Esophagus muscularis mucosa (tissue), 4 donors: ENCODE measurements at regions of chr12 and their contacts with region 1.

Region 1: DNA sequence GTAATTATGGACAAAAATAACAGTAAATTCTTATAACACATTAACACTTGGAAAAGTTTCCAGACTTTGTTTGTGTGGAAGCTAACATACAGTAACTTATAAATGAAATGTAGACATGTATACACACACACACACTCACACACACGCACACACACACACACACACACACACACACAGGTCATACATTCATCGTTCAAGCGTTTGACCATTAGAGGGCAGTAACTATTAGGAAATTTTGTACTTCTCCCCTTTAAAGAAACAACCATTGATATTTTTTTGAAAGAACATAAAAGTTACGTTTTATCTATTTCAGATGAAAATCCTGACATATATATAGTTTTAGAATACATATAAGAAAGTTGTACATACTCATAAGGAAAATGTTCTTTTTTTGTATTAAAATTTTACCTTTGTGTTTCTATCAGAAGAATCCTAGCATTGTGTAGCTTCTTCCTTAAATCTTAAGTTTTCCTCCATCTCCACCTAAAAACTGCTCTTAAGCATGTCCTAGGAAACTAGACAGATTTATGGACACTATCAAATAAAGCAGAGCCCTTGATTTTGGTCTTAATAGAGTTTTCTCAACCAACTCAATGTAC is 29.0 kb downstream of the PTPRQ start:
- DNase-seq: no peak
- H3K4me3 ChIP-seq: no peak overlapping the region
- H3K27ac ChIP-seq: no peak overlapping the region
- H3K4me1 ChIP-seq: no peaks in the 10 kb centered on the region
- H3K27me3 ChIP-seq: no peaks in the 10 kb centered on the region
- CTCF ChIP-seq: peak; percentile 29 to 62 (median 49)
- EP300 ChIP-seq: no peak
- POLR2A ChIP-seq: no peak

Region 2: GRCh38 chr12:80553316-80553715 is 80.3 kb after region 1 on chr12:
- intact Hi-C with region 1: no loop called
- DNase-seq: no peak
- H3K4me3 ChIP-seq: no peak overlapping the region
- H3K27ac ChIP-seq: peak overlapping the region; percentile 14 to 53 (median 32)
- H3K4me1 ChIP-seq: peaks cover 0 to 30% (median 19%) of the 10 kb centered on the region in 4 donors
- H3K27me3 ChIP-seq: no peaks in the 10 kb centered on the region
- CTCF ChIP-seq: no peak
- EP300 ChIP-seq: no peak
- POLR2A ChIP-seq: no peak

Region 3: GRCh38 chr12:80763874-80764273 is 290.9 kb after region 1 on chr12:
- intact Hi-C with region 1: loop called (anchors 5 kb)
- DNase-seq: no peak
- H3K4me3 ChIP-seq: no peak overlapping the region
- H3K27ac ChIP-seq: no peak overlapping the region
- H3K4me1 ChIP-seq: peaks cover 0 to 7% (median 2%) of the 10 kb centered on the region in 4 donors
- H3K27me3 ChIP-seq: no peaks in the 10 kb centered on the region
- CTCF ChIP-seq: peak; percentile 57 to 65 (median 64)
- EP300 ChIP-seq: no peak
- POLR2A ChIP-seq: no peak